ENCODE measurements at regions of chr1 and their contacts with region 1.

Region 1: DNA sequence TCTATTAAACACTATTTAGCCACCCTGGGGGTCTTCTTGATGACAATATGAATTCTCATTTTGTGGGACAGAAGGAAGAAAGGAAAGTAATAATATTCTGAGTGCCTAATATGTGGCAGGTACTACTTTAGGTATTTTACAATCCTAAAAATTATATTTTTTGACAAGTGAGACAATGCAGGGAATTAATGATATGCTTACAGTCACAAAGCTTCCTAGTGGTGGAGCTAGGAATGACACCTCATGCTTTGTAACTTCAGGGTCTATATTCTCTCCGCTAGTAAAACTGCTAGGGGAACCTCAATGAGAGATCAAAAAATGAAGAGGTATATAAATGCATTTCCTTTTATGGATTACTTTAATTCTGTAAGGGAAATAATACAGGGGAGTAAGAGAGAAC is 44.3 kb downstream of the TPR start:
- DNase-seq: no peak
- H3K4me3 ChIP-seq: no peak overlapping the region
- H3K27ac ChIP-seq: no peak overlapping the region
- H3K4me1 ChIP-seq: no peaks in the 10 kb centered on the region
- H3K27me3 ChIP-seq: no peaks in the 10 kb centered on the region
- CTCF ChIP-seq: peak in 2 of 3 experiments; percentile 5 to 42; a peak in 2 of 4 replicates
- EP300 ChIP-seq: no peak
- POLR2A ChIP-seq: no peak
- RAD21 ChIP-seq: no peak

Region 2: DNA sequence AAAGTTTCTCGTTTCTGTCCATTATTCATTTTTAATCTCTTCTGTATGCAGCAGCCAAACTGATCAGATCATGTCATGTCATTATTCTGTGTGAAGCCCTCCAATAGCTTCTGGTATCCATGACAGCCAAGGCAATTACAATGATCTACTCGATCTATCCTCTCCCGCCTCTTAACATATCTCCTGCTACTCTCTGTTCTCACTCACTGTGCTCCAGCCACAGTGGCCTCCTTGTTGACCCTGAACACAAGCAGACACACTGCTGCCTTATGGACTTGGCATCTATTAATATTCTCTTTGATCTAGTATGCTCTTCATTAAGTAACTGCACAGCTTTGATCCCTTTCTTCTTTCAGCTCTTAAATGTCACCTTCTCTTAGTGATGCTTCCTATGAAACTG is 15.2 kb before region 1 on chr1:
- CTCF ChIA-PET with region 1: interaction called, 134 read pairs
- POLR2A ChIA-PET with region 1: interaction called, 5 read pairs
- DNase-seq: no peak
- H3K4me3 ChIP-seq: no peak overlapping the region
- H3K27ac ChIP-seq: no peak overlapping the region
- H3K4me1 ChIP-seq: no peaks in the 10 kb centered on the region
- H3K27me3 ChIP-seq: no peaks in the 10 kb centered on the region
- CTCF ChIP-seq: no peak
- EP300 ChIP-seq: no peak
- POLR2A ChIP-seq: no peak
- RAD21 ChIP-seq: no peak

Region 3: DNA sequence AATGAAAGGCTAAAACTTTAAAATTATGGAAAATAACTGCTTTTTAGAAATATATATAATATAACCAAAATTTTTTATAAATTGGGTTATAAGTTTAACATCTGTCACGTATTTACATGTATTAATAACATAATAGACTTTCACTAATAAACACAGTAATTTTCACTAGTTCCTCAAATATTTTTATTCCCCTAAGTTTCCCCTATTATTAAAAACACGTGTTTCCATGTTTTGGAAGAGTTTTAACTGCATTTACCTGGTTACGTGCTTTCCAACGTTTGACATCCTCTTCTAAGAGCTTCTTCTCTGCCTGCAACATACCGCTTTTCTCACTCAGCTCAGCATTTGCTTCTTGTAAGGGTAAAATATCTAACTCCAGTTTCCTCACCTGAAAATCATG is 10.0 kb after region 1 on chr1:
- CTCF ChIA-PET with region 1: interaction called, 60 read pairs
- POLR2A ChIA-PET with region 1: interaction called, 3 read pairs
- DNase-seq: no peak
- H3K4me3 ChIP-seq: no peak overlapping the region
- H3K27ac ChIP-seq: no peak overlapping the region
- H3K4me1 ChIP-seq: no peaks in the 10 kb centered on the region
- H3K27me3 ChIP-seq: no peaks in the 10 kb centered on the region
- CTCF ChIP-seq: no peak
- EP300 ChIP-seq: no peak
- POLR2A ChIP-seq: no peak
- RAD21 ChIP-seq: no peak

Region 4: GRCh38 chr1:186363891-186364290 is 33.1 kb after region 1 on chr1:
- CTCF ChIA-PET with region 1: interaction called, 17 read pairs
- POLR2A ChIA-PET with region 1: interaction called, 3 read pairs
- DNase-seq: no peak
- H3K4me3 ChIP-seq: no peak overlapping the region
- H3K27ac ChIP-seq: no peak overlapping the region
- H3K4me1 ChIP-seq: no peaks in the 10 kb centered on the region
- H3K27me3 ChIP-seq: no peaks in the 10 kb centered on the region
- CTCF ChIP-seq: no peak
- EP300 ChIP-seq: no peak
- POLR2A ChIP-seq: no peak
- RAD21 ChIP-seq: no peak

Region 5: DNA sequence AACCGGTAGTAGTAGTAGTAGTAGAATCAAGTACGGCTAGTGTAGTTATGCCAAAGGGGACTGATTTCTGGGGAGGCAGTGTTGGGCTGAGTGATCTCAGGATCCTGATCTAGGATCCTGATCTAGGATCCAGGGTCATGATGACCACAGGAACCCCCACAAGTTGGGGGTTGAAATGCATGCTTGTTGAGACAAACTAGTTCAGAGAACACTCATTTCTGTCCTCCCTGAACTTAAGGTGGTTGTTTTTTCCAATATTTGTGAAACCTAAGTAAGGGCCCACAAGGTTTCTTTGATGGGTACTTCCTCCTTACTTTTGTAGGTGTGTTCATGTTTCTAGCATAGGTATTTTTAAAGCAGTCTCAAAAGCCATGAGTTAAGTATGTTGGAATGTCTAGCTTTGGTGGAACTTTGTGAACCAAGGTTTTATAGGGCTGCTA is 164.1 kb after region 1 on chr1:
- CTCF ChIA-PET with region 1: no interaction called
- POLR2A ChIA-PET with region 1: no interaction called
- DNase-seq: no peak
- H3K4me3 ChIP-seq: no peak overlapping the region
- H3K27ac ChIP-seq: no peak overlapping the region
- H3K4me1 ChIP-seq: no peaks in the 10 kb centered on the region; a peak in 1 of 7 replicates
- H3K27me3 ChIP-seq: no peaks in the 10 kb centered on the region
- CTCF ChIP-seq: no peak
- EP300 ChIP-seq: no peak
- POLR2A ChIP-seq: no peak
- RAD21 ChIP-seq: no peak

Region 6: GRCh38 chr1:187091666-187092065 is 760.9 kb after region 1 on chr1:
- CTCF ChIA-PET with region 1: no interaction called
- POLR2A ChIA-PET with region 1: no interaction called
- DNase-seq: no peak
- H3K4me3 ChIP-seq: no peak overlapping the region
- H3K27ac ChIP-seq: no peak overlapping the region
- H3K4me1 ChIP-seq: no peaks in the 10 kb centered on the region
- H3K27me3 ChIP-seq: no peaks in the 10 kb centered on the region
- CTCF ChIP-seq: no peak
- EP300 ChIP-seq: no peak
- POLR2A ChIP-seq: no peak
- RAD21 ChIP-seq: no peak

Measured in H1 (cell line).